Caco-2 (cell line): ENCODE measurements at regions of chr12 and their contacts with region 1.

Region 1: GRCh38 chr12:82326905-82327503 is 31.2 kb downstream of the CCDC59 start:
- DNase-seq: no peak
- H3K4me3 ChIP-seq: no peak overlapping the region
- H3K4me3 Mint-ChIP-seq: no peak overlapping the region
- H3K27ac Mint-ChIP-seq: no peak overlapping the region
- H3K4me1 ChIP-seq: no peaks in the 10 kb centered on the region
- H3K4me1 Mint-ChIP-seq: no peaks in the 10 kb centered on the region
- H3K27me3 ChIP-seq: no peaks in the 10 kb centered on the region
- H3K27me3 Mint-ChIP-seq: no peaks in the 10 kb centered on the region
- CTCF ChIP-seq: peak; percentile 45 to 63

Region 2: DNA sequence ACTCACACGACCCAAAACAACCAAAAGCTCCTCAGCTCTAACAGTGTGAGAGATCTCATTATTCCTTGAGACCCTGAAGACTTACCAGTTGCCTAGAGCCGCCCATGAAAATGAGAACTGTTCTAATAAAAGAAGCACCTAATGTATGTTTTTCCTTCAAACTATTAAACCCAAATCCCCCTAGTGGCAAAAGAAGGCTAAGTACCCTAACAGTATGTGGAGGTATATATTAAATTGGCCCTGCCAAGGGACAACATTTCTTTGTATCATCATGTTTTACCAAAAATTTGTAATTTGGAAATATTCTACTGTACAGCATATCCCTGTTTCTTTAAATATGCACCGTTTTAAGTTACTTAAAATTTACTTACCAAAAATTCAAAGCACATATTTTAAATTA is 529.9 kb before region 1 on chr12:
- CTCF ChIA-PET with region 1: no interaction called
- POLR2A ChIA-PET with region 1: no interaction called
- intact Hi-C with region 1: loop called (anchors 1 kb)
- DNase-seq: peak in 1 of 2 experiments; percentile 22
- H3K4me3 ChIP-seq: no peak overlapping the region
- H3K4me3 Mint-ChIP-seq: no peak overlapping the region
- H3K27ac Mint-ChIP-seq: no peak overlapping the region
- H3K4me1 ChIP-seq: no peaks in the 10 kb centered on the region
- H3K4me1 Mint-ChIP-seq: no peaks in the 10 kb centered on the region
- H3K27me3 ChIP-seq: no peaks in the 10 kb centered on the region
- H3K27me3 Mint-ChIP-seq: peaks cover 7% of the 10 kb centered on the region
- CTCF ChIP-seq: peak in 1 of 2 experiments; percentile 39

Region 3: GRCh38 chr12:82019533-82019932 is 307.5 kb before region 1 on chr12:
- CTCF ChIA-PET with region 1: no interaction called
- POLR2A ChIA-PET with region 1: no interaction called
- intact Hi-C with region 1: loop called (anchors 10 kb)
- DNase-seq: no peak
- H3K4me3 ChIP-seq: no peak overlapping the region
- H3K4me3 Mint-ChIP-seq: no peak overlapping the region
- H3K27ac Mint-ChIP-seq: no peak overlapping the region
- H3K4me1 ChIP-seq: peaks cover 10% of the 10 kb centered on the region
- H3K4me1 Mint-ChIP-seq: peaks cover 6% of the 10 kb centered on the region
- H3K27me3 ChIP-seq: no peaks in the 10 kb centered on the region
- H3K27me3 Mint-ChIP-seq: no peaks in the 10 kb centered on the region
- CTCF ChIP-seq: peak in 1 of 2 experiments; percentile 2